CD4-positive, alpha-beta memory T cell (primary cell): ENCODE measurements at regions of chr11 and their contacts with region 1.

Region 1: GRCh38 chr11:82867495-82868082 is 32.6 kb downstream of the PRCP start:
- DNase-seq: peak; percentile 66 to 79 (median 69)
- H3K4me3 ChIP-seq: no peak overlapping the region
- H3K4me3 Mint-ChIP-seq: peak overlapping the region in 6 of 8 donors; percentile 40 to 77 (median 52)
- H3K27ac ChIP-seq: no peak overlapping the region
- H3K27ac Mint-ChIP-seq: peak overlapping the region in 4 of 7 donors; percentile 12 to 85 (median 46)
- H3K4me1 ChIP-seq: peaks cover 5% of the 10 kb centered on the region
- H3K4me1 Mint-ChIP-seq: peaks cover 11 to 24% (median 12%) of the 10 kb centered on the region in 4 donors
- H3K27me3 ChIP-seq: no peaks in the 10 kb centered on the region
- H3K27me3 Mint-ChIP-seq: peaks cover 0 to 2% of the 10 kb centered on the region in 2 donors

Region 2: DNA sequence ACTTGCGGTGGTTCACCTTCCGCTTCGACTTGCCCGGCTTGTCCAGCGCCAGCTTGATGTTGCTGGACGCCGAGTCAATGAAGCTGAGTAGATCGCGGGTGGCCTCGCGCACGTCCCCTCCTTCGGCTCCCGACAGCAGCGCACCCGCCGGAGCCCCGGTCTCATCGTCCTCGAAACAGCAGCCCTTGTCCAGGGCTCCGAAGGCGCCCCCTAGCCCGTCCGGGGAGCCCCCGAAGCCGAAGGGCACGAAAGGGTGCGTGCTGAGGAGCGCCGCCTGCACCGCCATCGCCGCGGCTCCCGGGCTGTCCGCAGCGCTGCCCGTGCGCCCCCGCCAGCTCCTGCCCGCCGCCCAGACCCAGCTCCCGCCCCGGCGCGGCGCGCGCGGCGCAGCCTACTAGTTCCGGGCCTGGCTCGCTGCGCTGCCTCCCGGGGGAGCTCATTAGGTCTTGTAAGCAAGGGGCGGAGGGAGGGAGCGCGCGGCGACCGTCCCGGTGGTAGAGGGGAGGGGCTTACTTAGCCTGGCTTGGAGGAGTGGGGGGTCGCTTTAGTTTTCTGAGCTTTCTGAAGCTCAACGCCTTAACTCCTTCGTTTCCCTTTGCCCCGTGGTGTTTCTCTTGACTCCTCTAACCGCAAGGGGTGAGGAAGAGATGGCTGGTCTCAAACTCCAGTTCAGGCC is 134.0 kb before region 1 on chr11 and contains the start of gene FAM181B:
- CTCF ChIA-PET with region 1: no interaction called
- POLR2A ChIA-PET with region 1: no interaction called
- intact Hi-C with region 1: loop called (anchors 5 kb)
- DNase-seq: peak in 3 of 5 donors; percentile 17 to 26 (median 19)
- H3K4me3 ChIP-seq: peak within 1 kb of the TSS in 1 of 2 donors; percentile 36
- H3K4me3 Mint-ChIP-seq: peak within 1 kb of the TSS; percentile 62 to 84 (median 76)
- H3K27ac ChIP-seq: no peak within 1 kb of the TSS
- H3K27ac Mint-ChIP-seq: no peak within 1 kb of the TSS
- H3K4me1 ChIP-seq: peaks cover 9% of the 10 kb centered on the region
- H3K4me1 Mint-ChIP-seq: peaks cover 2 to 28% (median 13%) of the 10 kb centered on the region in 4 donors
- H3K27me3 ChIP-seq: peaks cover 35% of the 10 kb centered on the region
- H3K27me3 Mint-ChIP-seq: peaks cover 47 to 59% of the 10 kb centered on the region in 2 donors
- total RNA-seq, gene FAM181B: 0.11 TPM in 1 of 2 experiments, not detected in the other

Region 3: GRCh38 chr11:82883853-82884252 is 16.3 kb after region 1 on chr11:
- CTCF ChIA-PET with region 1: interaction called, 38 read pairs
- POLR2A ChIA-PET with region 1: no interaction called
- intact Hi-C with region 1: no loop called
- DNase-seq: no peak
- H3K4me3 ChIP-seq: no peak overlapping the region
- H3K4me3 Mint-ChIP-seq: no peak overlapping the region
- H3K27ac ChIP-seq: no peak overlapping the region
- H3K27ac Mint-ChIP-seq: no peak overlapping the region
- H3K4me1 ChIP-seq: no peaks in the 10 kb centered on the region
- H3K4me1 Mint-ChIP-seq: peaks cover 0 to 7% (median 3%) of the 10 kb centered on the region in 4 donors
- H3K27me3 ChIP-seq: no peaks in the 10 kb centered on the region
- H3K27me3 Mint-ChIP-seq: no peaks in the 10 kb centered on the region

Region 4: DNA sequence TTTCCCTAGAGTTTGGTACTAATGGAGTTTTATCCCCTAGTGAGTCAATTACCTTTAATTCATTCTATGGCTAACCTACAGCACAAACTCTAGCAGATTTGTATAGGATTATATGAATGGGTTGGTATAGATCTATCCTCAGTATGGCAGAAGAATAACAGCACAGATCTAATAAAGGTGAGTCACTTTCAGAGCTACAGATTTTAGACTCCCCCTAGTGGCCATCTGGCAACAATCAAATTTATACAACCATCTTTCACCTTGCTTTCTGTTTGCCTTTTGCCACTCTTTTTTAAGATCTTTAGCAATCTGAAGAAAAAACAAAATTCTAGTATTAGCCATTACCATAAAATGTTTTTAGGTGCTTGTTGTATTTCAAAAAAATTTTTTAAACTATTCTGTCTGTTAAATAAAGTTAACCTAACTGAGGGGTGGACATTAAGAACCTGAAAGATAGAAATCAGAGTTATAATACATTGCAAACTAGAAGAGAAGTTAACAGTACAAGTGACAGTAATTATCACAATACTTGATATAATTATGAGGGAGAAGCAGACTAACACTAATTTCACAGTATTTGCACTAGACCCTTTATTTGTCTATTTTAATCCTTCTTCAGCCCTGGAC is 59.8 kb after region 1 on chr11:
- CTCF ChIA-PET with region 1: interaction called, 16 read pairs
- POLR2A ChIA-PET with region 1: no interaction called
- intact Hi-C with region 1: loop called (anchors 1 kb)
- DNase-seq: peak; percentile 50 to 71 (median 65)
- H3K4me3 ChIP-seq: no peak overlapping the region
- H3K4me3 Mint-ChIP-seq: no peak overlapping the region
- H3K27ac ChIP-seq: no peak overlapping the region
- H3K27ac Mint-ChIP-seq: peak overlapping the region in 2 of 7 donors; percentile 2 to 57
- H3K4me1 ChIP-seq: peaks cover 8% of the 10 kb centered on the region
- H3K4me1 Mint-ChIP-seq: peaks cover 16 to 22% (median 18%) of the 10 kb centered on the region in 4 donors
- H3K27me3 ChIP-seq: no peaks in the 10 kb centered on the region
- H3K27me3 Mint-ChIP-seq: no peaks in the 10 kb centered on the region

Region 5: DNA sequence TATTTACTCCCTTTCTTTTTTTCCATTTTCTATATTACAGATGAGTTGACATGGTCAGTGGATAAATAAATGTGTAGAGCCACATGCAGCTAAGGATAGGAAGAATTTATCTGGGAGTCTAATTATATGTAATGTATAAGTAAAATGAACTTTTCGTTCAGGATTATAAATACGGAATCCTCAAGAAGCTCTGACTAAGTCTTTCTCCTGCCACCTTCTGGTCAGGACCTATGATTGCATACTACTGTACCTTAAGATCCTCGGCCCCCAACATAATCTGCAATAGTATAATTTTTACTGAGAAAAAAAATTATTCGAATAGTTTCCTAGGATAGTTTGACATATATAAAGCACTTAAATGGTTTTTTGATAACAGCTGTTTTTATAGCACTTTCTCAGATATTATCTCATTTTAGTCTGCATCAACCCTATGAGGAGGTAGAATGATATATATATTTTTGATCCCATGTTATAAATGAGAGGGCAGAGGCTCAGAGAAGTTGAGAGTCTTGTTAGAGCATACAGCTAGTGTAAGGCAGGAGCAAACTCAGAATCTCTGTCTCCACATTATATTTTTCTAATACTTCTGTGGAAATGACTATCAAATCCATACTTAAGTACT is 382.5 kb after region 1 on chr11:
- CTCF ChIA-PET with region 1: interaction called, 93 read pairs
- POLR2A ChIA-PET with region 1: interaction called, 3 read pairs
- intact Hi-C with region 1: loop called (anchors 1 kb)
- DNase-seq: peak in 4 of 5 donors; percentile 28 to 43 (median 38)
- H3K4me3 ChIP-seq: no peak overlapping the region
- H3K4me3 Mint-ChIP-seq: no peak overlapping the region
- H3K27ac ChIP-seq: no peak overlapping the region
- H3K27ac Mint-ChIP-seq: no peak overlapping the region
- H3K4me1 ChIP-seq: no peaks in the 10 kb centered on the region
- H3K4me1 Mint-ChIP-seq: peaks cover 0 to 4% (median 2%) of the 10 kb centered on the region in 4 donors
- H3K27me3 ChIP-seq: no peaks in the 10 kb centered on the region
- H3K27me3 Mint-ChIP-seq: no peaks in the 10 kb centered on the region

Region 6: GRCh38 chr11:83724008-83724461 is 856.4 kb after region 1 on chr11:
- CTCF ChIA-PET with region 1: interaction called, 3 read pairs
- POLR2A ChIA-PET with region 1: no interaction called
- intact Hi-C with region 1: loop called (anchors 5 kb)
- DNase-seq: peak in 3 of 5 donors; percentile 3 to 9 (median 4)
- H3K4me3 ChIP-seq: no peak overlapping the region
- H3K4me3 Mint-ChIP-seq: peak overlapping the region; percentile 40 to 87 (median 68)
- H3K27ac ChIP-seq: no peak overlapping the region
- H3K27ac Mint-ChIP-seq: no peak overlapping the region
- H3K4me1 ChIP-seq: no peaks in the 10 kb centered on the region
- H3K4me1 Mint-ChIP-seq: peaks cover 6 to 9% (median 7%) of the 10 kb centered on the region in 4 donors
- H3K27me3 ChIP-seq: no peaks in the 10 kb centered on the region
- H3K27me3 Mint-ChIP-seq: peaks cover 2 to 4% of the 10 kb centered on the region in 2 donors